Ascending aorta (tissue), 2 donors: ENCODE measurements at regions of chr11 and their contacts with region 1.

Region 1: DNA sequence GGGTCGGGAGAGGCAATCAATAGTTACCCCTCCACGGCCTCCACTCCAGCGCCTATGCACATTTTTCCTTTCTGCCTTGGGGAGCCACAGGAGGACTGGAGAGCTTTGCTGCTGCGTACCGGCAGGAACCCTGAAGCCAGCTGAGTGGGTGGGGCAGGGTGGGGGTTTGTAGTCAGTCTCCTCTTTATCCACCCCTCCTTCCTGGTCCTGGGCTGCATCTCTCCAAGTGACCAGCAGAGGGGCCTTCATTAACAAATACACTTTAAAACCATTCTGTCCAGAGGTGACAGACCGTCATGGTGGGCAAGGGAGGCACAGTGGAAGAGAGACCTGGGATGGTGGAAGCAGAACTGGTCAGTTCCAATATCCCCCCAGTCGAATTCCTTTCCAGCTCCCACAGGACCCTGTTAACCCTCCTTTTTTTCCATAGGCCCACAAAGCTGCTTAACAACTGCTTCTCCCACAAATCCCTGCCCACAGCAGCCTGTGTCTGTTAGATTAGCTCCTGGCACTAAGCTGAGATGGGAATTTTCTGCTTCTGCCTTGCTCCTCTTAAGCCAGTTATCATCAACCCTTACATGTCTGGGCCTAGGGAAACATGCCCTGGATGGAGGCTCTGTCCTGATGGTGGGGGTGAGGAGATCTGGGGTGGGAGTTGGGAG is 3.9 kb upstream of the ABCG4 start:
- DNase-seq: peak in 1 of 2 donors; percentile 79
- H3K4me3 ChIP-seq: no peak overlapping the region
- H3K27ac ChIP-seq: no peak overlapping the region
- H3K4me1 ChIP-seq: peaks cover 0 to 10% of the 10 kb centered on the region in 2 donors
- H3K27me3 ChIP-seq: no peaks in the 10 kb centered on the region
- CTCF ChIP-seq: peak; percentile 34 to 69 (median 67)

Region 2: GRCh38 chr11:119181677-119182412 is 36.9 kb after region 1 on chr11:
- intact Hi-C with region 1: no loop called
- DNase-seq: no peak
- H3K4me3 ChIP-seq: no peak overlapping the region
- H3K27ac ChIP-seq: no peak overlapping the region
- H3K4me1 ChIP-seq: peaks cover 0 to 3% of the 10 kb centered on the region in 2 donors
- H3K27me3 ChIP-seq: no peaks in the 10 kb centered on the region
- CTCF ChIP-seq: no peak

Region 3: GRCh38 chr11:119196833-119197483 is 52.0 kb after region 1 on chr11:
- intact Hi-C with region 1: loop called (anchors 2 kb)
- DNase-seq: peak in 1 of 2 donors; percentile 79
- H3K4me3 ChIP-seq: no peak overlapping the region
- H3K27ac ChIP-seq: no peak overlapping the region
- H3K4me1 ChIP-seq: no peaks in the 10 kb centered on the region
- H3K27me3 ChIP-seq: no peaks in the 10 kb centered on the region
- CTCF ChIP-seq: peak; percentile 51 to 73 (median 68)

Region 4: GRCh38 chr11:119334174-119334930 is 189.4 kb after region 1 on chr11 and contains the start of gene RNF26:
- intact Hi-C with region 1: no loop called
- DNase-seq: peak; percentile 84 to 98
- H3K4me3 ChIP-seq: peak within 1 kb of the TSS; percentile 77 to 97
- H3K27ac ChIP-seq: peak within 1 kb of the TSS; percentile 76 to 87
- H3K4me1 ChIP-seq: peaks cover 10 to 27% of the 10 kb centered on the region in 2 donors
- H3K27me3 ChIP-seq: no peaks in the 10 kb centered on the region
- CTCF ChIP-seq: no peak
- total RNA-seq, gene RNF26: 16.8 TPM